ENCODE measurements at regions of chr4 and their contacts with region 1.

Region 1: DNA sequence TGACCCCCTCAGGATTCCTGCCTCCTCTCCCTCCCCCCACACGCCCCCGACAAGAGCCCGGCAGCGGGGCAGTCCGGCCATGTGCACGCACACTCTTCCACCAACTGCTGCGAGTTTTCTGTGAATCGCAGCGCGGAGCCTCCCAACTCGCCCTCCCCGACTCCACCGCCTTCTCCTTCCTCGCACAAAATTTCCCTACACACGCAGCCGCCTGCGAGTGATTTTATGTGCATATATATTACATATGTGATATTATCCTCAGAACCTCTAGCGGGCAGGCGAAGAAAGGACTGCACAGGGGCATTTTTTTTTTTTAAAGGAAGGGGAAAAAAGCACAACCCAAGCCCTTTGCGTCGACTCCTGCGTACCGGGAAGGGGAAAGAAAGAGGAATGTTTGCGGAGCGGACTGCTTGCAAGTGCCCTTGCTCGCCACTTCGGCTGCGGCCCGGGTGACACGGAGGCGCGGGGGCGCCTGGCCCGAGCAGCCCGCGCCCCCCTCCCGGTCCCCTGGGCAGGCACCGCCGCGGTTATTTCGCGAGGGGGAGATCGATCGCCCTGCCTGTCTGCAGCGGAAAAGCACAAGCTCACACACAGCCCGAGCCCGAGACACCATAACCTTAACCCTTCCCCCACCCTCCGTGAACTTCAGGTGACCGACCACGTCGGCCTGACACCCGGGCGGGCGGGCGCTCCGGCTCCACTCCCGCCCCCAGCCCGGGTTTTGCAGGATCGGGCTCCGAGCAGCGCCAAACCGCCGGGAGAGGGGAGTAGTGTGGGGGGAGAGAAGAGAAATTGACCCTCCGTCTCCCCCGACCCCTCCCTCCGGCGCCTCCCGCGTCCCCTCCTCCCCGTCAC is 2.3 kb downstream of the ZNF827 start:
- DNase-seq: peak; percentile 75
- H3K4me3 ChIP-seq: peak overlapping the region; percentile 60
- H3K27ac ChIP-seq: peak overlapping the region; percentile 97
- H3K4me1 ChIP-seq: no peaks in the 10 kb centered on the region
- H3K27me3 ChIP-seq: no peaks in the 10 kb centered on the region
- CTCF ChIP-seq: no peak

Region 2: DNA sequence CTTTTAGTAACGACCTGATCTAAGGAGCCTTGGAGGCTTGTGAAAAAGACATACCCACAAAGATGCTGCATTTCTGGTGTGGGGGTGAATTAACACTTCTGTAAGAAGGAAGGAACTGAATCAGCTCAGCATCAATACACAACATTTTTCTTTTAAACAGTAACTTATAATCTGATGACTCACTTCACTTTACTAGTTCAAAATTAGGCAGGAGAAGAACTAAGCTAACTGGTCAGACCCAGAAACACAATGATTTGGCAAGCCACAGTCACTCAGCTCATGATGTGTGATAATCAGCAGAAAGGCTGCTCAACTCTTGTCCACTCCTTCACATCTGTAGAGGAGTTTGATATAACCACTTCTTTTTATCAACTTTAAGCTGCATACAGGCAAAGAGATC is 312.5 kb before region 1 on chr4:
- intact Hi-C with region 1: loop called (anchors 10 kb)
- DNase-seq: no peak
- H3K4me3 ChIP-seq: no peak overlapping the region
- H3K27ac ChIP-seq: no peak overlapping the region
- H3K4me1 ChIP-seq: no peaks in the 10 kb centered on the region
- H3K27me3 ChIP-seq: no peaks in the 10 kb centered on the region
- CTCF ChIP-seq: no peak

Region 3: GRCh38 chr4:145732895-145733880 is 203.2 kb before region 1 on chr4:
- intact Hi-C with region 1: loop called (anchors 5 kb)
- DNase-seq: peak; percentile 91
- H3K4me3 ChIP-seq: peak overlapping the region; percentile 48
- H3K27ac ChIP-seq: peak overlapping the region; percentile 87
- H3K4me1 ChIP-seq: peaks cover 10% of the 10 kb centered on the region
- H3K27me3 ChIP-seq: no peaks in the 10 kb centered on the region
- CTCF ChIP-seq: no peak

Measured in colonic mucosa (tissue), 4 donors.